PC-3 (cell line): ENCODE measurements at regions of chr19 and their contacts with region 1.

Region 1: GRCh38 chr19:10505583-10506229 is 2.5 kb upstream of the KEAP1 start:
- DNase-seq: peak; percentile 79
- ATAC-seq: no peak
- H3K4me3 ChIP-seq: no peak overlapping the region
- H3K27ac ChIP-seq: no peak overlapping the region
- H3K4me1 ChIP-seq: peaks cover 9% of the 10 kb centered on the region; the same call in 1 of the 2 replicates
- H3K27me3 ChIP-seq: no peaks in the 10 kb centered on the region
- CTCF ChIP-seq: peak; percentile 89

Region 2: GRCh38 chr19:10523135-10523636 is 17.5 kb after region 1 on chr19:
- CTCF ChIA-PET with region 1: interaction called, 3 read pairs
- POLR2A ChIA-PET with region 1: interaction called, 23 read pairs
- intact Hi-C with region 1: no loop called
- DNase-seq: no peak
- ATAC-seq: no peak
- H3K4me3 ChIP-seq: no peak overlapping the region
- H3K27ac ChIP-seq: no peak overlapping the region
- H3K4me1 ChIP-seq: peaks cover 7% of the 10 kb centered on the region; the same call in 1 of the 2 replicates
- H3K27me3 ChIP-seq: no peaks in the 10 kb centered on the region
- CTCF ChIP-seq: no peak

Region 3: GRCh38 chr19:10568826-10569651 is 63.3 kb after region 1 on chr19 and contains the start of gene CDKN2D:
- CTCF ChIA-PET with region 1: interaction called, 7 read pairs
- POLR2A ChIA-PET with region 1: no interaction called
- intact Hi-C with region 1: loop called (anchors 2 kb)
- DNase-seq: peak; percentile 100
- ATAC-seq: peak; percentile 87
- H3K4me3 ChIP-seq: peak within 1 kb of the TSS; percentile 72
- H3K27ac ChIP-seq: peak within 1 kb of the TSS; percentile 84
- H3K4me1 ChIP-seq: peaks cover 32% of the 10 kb centered on the region
- H3K27me3 ChIP-seq: no peaks in the 10 kb centered on the region
- CTCF ChIP-seq: no peak
- total RNA-seq, gene CDKN2D: 17.1 and 22.5 TPM in 2 replicates